Mammary epithelial cell (primary cell): ENCODE measurements at regions of chr1 and their contacts with region 1.

Region 1: DNA sequence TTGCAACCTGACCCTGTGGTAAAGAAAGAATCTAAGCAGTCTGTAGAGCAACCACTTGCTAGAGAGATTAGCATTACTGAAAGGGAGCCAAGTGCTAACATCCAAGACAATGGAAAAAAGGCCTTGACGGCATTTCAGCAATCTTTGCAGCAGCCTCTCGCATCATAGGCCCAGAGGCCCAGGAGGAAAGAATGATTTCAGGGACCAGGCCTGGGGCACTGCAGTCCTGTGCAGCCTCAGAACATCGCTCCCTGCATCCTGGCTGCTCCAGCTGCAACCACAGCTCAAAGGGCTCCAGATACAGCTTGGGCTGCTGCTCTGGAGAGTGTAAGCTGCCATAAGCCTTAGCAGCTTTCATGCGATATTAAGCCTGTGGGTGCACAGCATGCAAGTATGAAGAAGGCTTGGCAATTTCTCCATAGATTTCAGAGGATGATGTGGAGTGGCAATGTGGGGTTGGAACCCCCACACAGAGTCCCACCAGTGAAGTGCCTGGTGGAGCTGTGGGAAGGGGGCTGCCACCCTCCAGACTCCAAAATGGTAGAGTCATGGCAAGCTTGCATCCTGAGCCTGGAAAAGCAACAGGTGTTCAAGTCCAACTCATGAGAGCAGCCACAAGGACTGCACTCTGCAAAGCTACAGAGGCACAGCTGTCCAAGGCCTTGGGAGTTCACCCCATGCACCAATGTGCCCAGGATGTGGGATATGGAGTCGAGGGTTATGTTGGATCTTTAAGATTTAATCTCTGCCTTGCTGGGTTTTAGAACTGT is 110.6 kb upstream of the HMGB4 start:
- DNase-seq: no peak
- H3K4me3 ChIP-seq: no peak overlapping the region
- H3K27ac ChIP-seq: no peak overlapping the region
- H3K4me1 ChIP-seq: no peaks in the 10 kb centered on the region
- H3K27me3 ChIP-seq: peaks cover 2% of the 10 kb centered on the region
- CTCF ChIP-seq: no peak

Region 2: GRCh38 chr1:33649759-33650158 is 103.5 kb before region 1 on chr1:
- CTCF ChIA-PET with region 1: no interaction called
- dilution Hi-C with region 1: loop called (anchors 5 kb)
- in situ Hi-C with region 1: no loop called
- intact Hi-C with region 1: no loop called
- DNase-seq: no peak
- H3K4me3 ChIP-seq: no peak overlapping the region
- H3K27ac ChIP-seq: no peak overlapping the region
- H3K4me1 ChIP-seq: no peaks in the 10 kb centered on the region
- H3K27me3 ChIP-seq: no peaks in the 10 kb centered on the region
- CTCF ChIP-seq: no peak

Region 3: GRCh38 chr1:33784876-33785275 is 31.6 kb after region 1 on chr1:
- CTCF ChIA-PET with region 1: no interaction called
- dilution Hi-C with region 1: no loop called
- in situ Hi-C with region 1: no loop called
- intact Hi-C with region 1: no loop called
- DNase-seq: no peak
- H3K4me3 ChIP-seq: no peak overlapping the region
- H3K27ac ChIP-seq: no peak overlapping the region
- H3K4me1 ChIP-seq: no peaks in the 10 kb centered on the region
- H3K27me3 ChIP-seq: no peaks in the 10 kb centered on the region
- CTCF ChIP-seq: no peak